ENCODE measurements at regions of chr15 and their contacts with region 1.

Region 1: GRCh38 chr15:85504749-85505676 is 124.6 kb downstream of the AKAP13 start:
- DNase-seq: peak in 25 of 35 experiments; percentile 7 to 73 (median 33)
- ATAC-seq: peak; percentile 43 to 67 (median 48)
- H3K4me3 ChIP-seq: no peak overlapping the region
- H3K4me3 Mint-ChIP-seq: no peak overlapping the region
- H3K27ac ChIP-seq: no peak overlapping the region
- H3K27ac Mint-ChIP-seq: no peak overlapping the region
- H3K4me1 ChIP-seq: peaks cover 3 to 20% of the 10 kb centered on the region in 2 experiments
- H3K4me1 Mint-ChIP-seq: peaks cover 70 to 84% (median 74%) of the 10 kb centered on the region in 3 donors
- H3K27me3 ChIP-seq: no peaks in the 10 kb centered on the region
- H3K27me3 Mint-ChIP-seq: no peaks in the 10 kb centered on the region

Region 2: GRCh38 chr15:85489773-85490493 is 15.1 kb before region 1 on chr15:
- CTCF ChIA-PET with region 1: interaction called, 5 to 19 read pairs
- POLR2A ChIA-PET with region 1: interaction called in 1 of 2 experiments, 3 read pairs
- DNase-seq: no peak
- ATAC-seq: peak in 2 of 4 experiments; percentile 26 to 39
- H3K4me3 ChIP-seq: no peak overlapping the region
- H3K4me3 Mint-ChIP-seq: no peak overlapping the region
- H3K27ac ChIP-seq: no peak overlapping the region
- H3K27ac Mint-ChIP-seq: peak overlapping the region in 1 of 2 donors; percentile 1
- H3K4me1 ChIP-seq: peaks cover 9 to 14% of the 10 kb centered on the region in 2 experiments
- H3K4me1 Mint-ChIP-seq: peaks cover 59 to 79% (median 75%) of the 10 kb centered on the region in 3 donors
- H3K27me3 ChIP-seq: no peaks in the 10 kb centered on the region
- H3K27me3 Mint-ChIP-seq: no peaks in the 10 kb centered on the region

Region 3: GRCh38 chr15:85639752-85640381 is 134.9 kb after region 1 on chr15:
- CTCF ChIA-PET with region 1: no interaction called
- POLR2A ChIA-PET with region 1: no interaction called
- DNase-seq: no peak
- ATAC-seq: no peak
- H3K4me3 ChIP-seq: no peak overlapping the region
- H3K4me3 Mint-ChIP-seq: no peak overlapping the region
- H3K27ac ChIP-seq: no peak overlapping the region
- H3K27ac Mint-ChIP-seq: no peak overlapping the region
- H3K4me1 ChIP-seq: peaks cover under 1 to 7% of the 10 kb centered on the region in 2 experiments
- H3K4me1 Mint-ChIP-seq: peaks cover 32 to 46% (median 40%) of the 10 kb centered on the region in 3 donors
- H3K27me3 ChIP-seq: no peaks in the 10 kb centered on the region
- H3K27me3 Mint-ChIP-seq: no peaks in the 10 kb centered on the region